Caco-2 (cell line): ENCODE measurements at regions of chr6 and their contacts with region 1.

Region 1: GRCh38 chr6:56708810-56709597 is 66.3 kb upstream of the DST start:
- DNase-seq: peak in 1 of 2 experiments; percentile 33
- H3K4me3 ChIP-seq: no peak overlapping the region
- H3K4me3 Mint-ChIP-seq: no peak overlapping the region
- H3K27ac Mint-ChIP-seq: no peak overlapping the region
- H3K4me1 ChIP-seq: peaks cover 22% of the 10 kb centered on the region
- H3K4me1 Mint-ChIP-seq: peaks cover 19% of the 10 kb centered on the region
- H3K27me3 ChIP-seq: no peaks in the 10 kb centered on the region
- H3K27me3 Mint-ChIP-seq: no peaks in the 10 kb centered on the region
- CTCF ChIP-seq: peak; percentile 30 to 37

Region 2: GRCh38 chr6:55882720-55883595 is 826.0 kb before region 1 on chr6:
- CTCF ChIA-PET with region 1: no interaction called
- POLR2A ChIA-PET with region 1: no interaction called
- intact Hi-C with region 1: no loop called
- DNase-seq: no peak
- H3K4me3 ChIP-seq: no peak overlapping the region
- H3K4me3 Mint-ChIP-seq: no peak overlapping the region
- H3K27ac Mint-ChIP-seq: no peak overlapping the region
- H3K4me1 ChIP-seq: peaks cover 15% of the 10 kb centered on the region
- H3K4me1 Mint-ChIP-seq: peaks cover 10% of the 10 kb centered on the region
- H3K27me3 ChIP-seq: no peaks in the 10 kb centered on the region
- H3K27me3 Mint-ChIP-seq: no peaks in the 10 kb centered on the region
- CTCF ChIP-seq: no peak

Region 3: GRCh38 chr6:56742122-56742791 is 33.3 kb after region 1 on chr6:
- CTCF ChIA-PET with region 1: interaction called, 3 read pairs
- POLR2A ChIA-PET with region 1: no interaction called
- intact Hi-C with region 1: loop called (anchors 1 kb)
- DNase-seq: no peak
- H3K4me3 ChIP-seq: peak overlapping the region; percentile 7
- H3K4me3 Mint-ChIP-seq: peak overlapping the region; percentile 67
- H3K27ac Mint-ChIP-seq: peak overlapping the region; percentile 53
- H3K4me1 ChIP-seq: peaks cover 53% of the 10 kb centered on the region
- H3K4me1 Mint-ChIP-seq: peaks cover 45% of the 10 kb centered on the region
- H3K27me3 ChIP-seq: no peaks in the 10 kb centered on the region
- H3K27me3 Mint-ChIP-seq: no peaks in the 10 kb centered on the region
- CTCF ChIP-seq: no peak

Region 4: GRCh38 chr6:56757588-56757984 is 48.6 kb after region 1 on chr6:
- CTCF ChIA-PET with region 1: interaction called, 7 read pairs
- POLR2A ChIA-PET with region 1: no interaction called
- intact Hi-C with region 1: loop called (anchors 1 kb)
- DNase-seq: peak; percentile 42 to 51
- H3K4me3 ChIP-seq: no peak overlapping the region
- H3K4me3 Mint-ChIP-seq: no peak overlapping the region
- H3K27ac Mint-ChIP-seq: no peak overlapping the region
- H3K4me1 ChIP-seq: peaks cover 44% of the 10 kb centered on the region
- H3K4me1 Mint-ChIP-seq: peaks cover 28% of the 10 kb centered on the region
- H3K27me3 ChIP-seq: no peaks in the 10 kb centered on the region
- H3K27me3 Mint-ChIP-seq: no peaks in the 10 kb centered on the region
- CTCF ChIP-seq: peak; percentile 43 to 70

Region 5: GRCh38 chr6:56843573-56844349 is 134.8 kb after region 1 on chr6:
- CTCF ChIA-PET with region 1: no interaction called
- POLR2A ChIA-PET with region 1: no interaction called
- intact Hi-C with region 1: loop called (anchors 1 kb)
- DNase-seq: peak; percentile 82 to 89
- H3K4me3 ChIP-seq: peak overlapping the region; percentile 59
- H3K4me3 Mint-ChIP-seq: peak overlapping the region; percentile 85
- H3K27ac Mint-ChIP-seq: no peak overlapping the region
- H3K4me1 ChIP-seq: peaks cover 27% of the 10 kb centered on the region
- H3K4me1 Mint-ChIP-seq: peaks cover 7% of the 10 kb centered on the region
- H3K27me3 ChIP-seq: no peaks in the 10 kb centered on the region
- H3K27me3 Mint-ChIP-seq: no peaks in the 10 kb centered on the region
- CTCF ChIP-seq: peak; percentile 58 to 71

Region 6: DNA sequence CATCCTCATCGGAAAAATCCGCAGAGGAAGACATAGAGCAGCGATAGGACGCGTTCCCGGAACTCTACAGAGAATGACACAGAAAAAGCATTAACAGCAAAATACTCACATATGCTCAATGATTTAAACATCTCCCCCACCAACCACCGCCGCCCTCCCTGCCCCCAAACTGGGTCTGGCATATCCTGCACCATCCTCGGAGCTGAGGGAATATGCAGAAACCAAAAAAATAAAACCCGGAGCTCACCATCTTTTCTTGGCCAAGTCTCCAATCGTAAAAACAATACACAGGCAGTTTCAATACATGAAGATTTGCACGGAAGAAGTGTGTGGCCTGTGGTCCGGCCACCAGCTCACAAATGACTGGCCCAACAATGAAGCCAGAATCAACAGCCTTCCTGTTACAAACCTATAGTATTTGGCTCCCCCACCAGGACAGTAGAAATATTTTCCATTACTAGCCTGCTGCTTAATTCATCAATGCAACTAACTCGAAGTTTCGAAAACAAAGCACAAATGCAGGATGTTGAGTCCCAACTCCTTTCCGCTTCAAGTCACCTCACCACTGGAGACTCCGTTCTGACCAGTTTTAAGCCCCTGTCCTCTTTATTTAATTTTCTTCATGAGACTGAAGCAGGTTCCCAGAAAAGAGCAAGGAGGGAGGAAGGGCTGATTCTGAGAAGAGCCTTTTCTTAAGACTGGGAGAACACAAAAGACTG is 142.7 kb after region 1 on chr6:
- CTCF ChIA-PET with region 1: interaction called, 14 read pairs
- POLR2A ChIA-PET with region 1: no interaction called
- intact Hi-C with region 1: loop called (anchors 1 kb)
- DNase-seq: peak in 1 of 2 experiments; percentile 56
- H3K4me3 ChIP-seq: no peak overlapping the region
- H3K4me3 Mint-ChIP-seq: no peak overlapping the region
- H3K27ac Mint-ChIP-seq: no peak overlapping the region
- H3K4me1 ChIP-seq: peaks cover 6% of the 10 kb centered on the region; the same call in 1 of the 2 replicates
- H3K4me1 Mint-ChIP-seq: peaks cover 10% of the 10 kb centered on the region
- H3K27me3 ChIP-seq: no peaks in the 10 kb centered on the region
- H3K27me3 Mint-ChIP-seq: no peaks in the 10 kb centered on the region
- CTCF ChIP-seq: peak; percentile 39 to 47

Region 7: DNA sequence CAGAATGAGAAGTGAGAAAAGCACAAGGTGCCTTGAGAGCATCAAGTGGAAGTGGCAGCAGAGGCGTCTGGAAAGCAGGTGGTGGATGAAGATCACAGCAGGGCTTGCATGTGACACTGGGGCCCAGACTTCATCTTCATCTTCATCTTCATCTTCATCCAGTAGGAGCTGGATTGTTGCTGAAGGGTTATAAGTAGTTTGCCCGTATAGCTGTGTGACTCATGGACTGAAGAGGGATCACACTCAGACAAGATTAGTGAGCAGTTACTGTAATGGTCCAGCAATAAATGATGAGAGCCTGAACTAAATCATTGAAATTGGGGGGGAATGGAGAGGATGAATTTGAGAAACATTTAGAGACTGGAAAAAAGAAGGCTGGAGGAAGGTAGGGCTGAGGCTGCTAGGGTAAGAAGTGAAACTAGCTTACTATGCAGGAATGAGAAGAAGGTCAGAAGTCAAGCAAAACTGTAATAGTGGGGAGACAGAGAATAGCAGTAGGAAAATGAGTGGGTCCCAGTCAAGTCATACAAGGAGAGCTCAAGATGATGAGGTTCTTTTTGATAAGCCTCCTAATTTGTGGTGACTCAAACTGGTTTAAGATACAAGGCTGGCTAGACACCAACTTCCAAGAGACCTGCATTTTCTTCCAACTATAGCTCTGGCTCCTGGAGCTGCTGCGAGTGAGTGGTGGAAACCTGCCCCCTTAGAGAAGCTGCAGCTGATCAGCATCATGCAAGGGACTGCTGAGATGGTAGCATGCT is 153.6 kb after region 1 on chr6:
- CTCF ChIA-PET with region 1: no interaction called
- POLR2A ChIA-PET with region 1: no interaction called
- intact Hi-C with region 1: no loop called
- DNase-seq: no peak
- H3K4me3 ChIP-seq: no peak overlapping the region
- H3K4me3 Mint-ChIP-seq: no peak overlapping the region
- H3K27ac Mint-ChIP-seq: no peak overlapping the region
- H3K4me1 ChIP-seq: peaks cover 26% of the 10 kb centered on the region
- H3K4me1 Mint-ChIP-seq: peaks cover 21% of the 10 kb centered on the region
- H3K27me3 ChIP-seq: no peaks in the 10 kb centered on the region
- H3K27me3 Mint-ChIP-seq: no peaks in the 10 kb centered on the region
- CTCF ChIP-seq: no peak

Region 8: GRCh38 chr6:57040009-57040408 is 331.0 kb after region 1 on chr6:
- CTCF ChIA-PET with region 1: no interaction called
- POLR2A ChIA-PET with region 1: no interaction called
- intact Hi-C with region 1: no loop called
- DNase-seq: no peak
- H3K4me3 ChIP-seq: no peak overlapping the region
- H3K4me3 Mint-ChIP-seq: no peak overlapping the region
- H3K27ac Mint-ChIP-seq: no peak overlapping the region
- H3K4me1 ChIP-seq: no peaks in the 10 kb centered on the region
- H3K4me1 Mint-ChIP-seq: no peaks in the 10 kb centered on the region
- H3K27me3 ChIP-seq: no peaks in the 10 kb centered on the region
- H3K27me3 Mint-ChIP-seq: peaks cover 16% of the 10 kb centered on the region
- CTCF ChIP-seq: no peak